HCT116 (cell line): ENCODE measurements at regions of chr11 and their contacts with region 1.

Region 1: DNA sequence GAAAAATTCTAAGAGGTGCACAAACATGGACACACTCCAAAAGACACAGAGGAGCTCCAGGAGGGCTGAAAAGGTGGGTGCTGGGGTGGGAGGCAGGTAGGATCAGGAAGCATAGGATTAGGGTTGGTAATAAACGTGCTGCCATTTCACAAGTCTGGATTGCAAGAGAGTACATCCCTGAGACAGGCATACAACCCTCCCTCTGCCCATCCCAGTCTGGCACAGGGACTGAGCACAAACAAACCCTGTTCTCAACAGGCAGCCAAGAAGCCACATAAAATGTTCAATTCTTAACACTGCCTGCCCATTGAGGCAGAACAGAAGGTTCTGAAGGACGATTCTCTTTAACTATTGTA is 18.5 kb downstream of the SLC35F2 start:
- DNase-seq: no peak
- ATAC-seq: peak; percentile 61
- H3K4me3 ChIP-seq: peak overlapping the region in 1 of 2 experiments; percentile 49; a peak in 2 of 4 replicates
- H3K27ac ChIP-seq: peak overlapping the region; percentile 69
- H3K4me1 ChIP-seq: peaks cover 54 to 67% of the 10 kb centered on the region in 2 experiments
- H3K27me3 ChIP-seq: no peaks in the 10 kb centered on the region
- CTCF ChIP-seq: no peak
- POLR2A ChIP-seq: no peak
- RAD21 ChIP-seq: no peak

Region 2: DNA sequence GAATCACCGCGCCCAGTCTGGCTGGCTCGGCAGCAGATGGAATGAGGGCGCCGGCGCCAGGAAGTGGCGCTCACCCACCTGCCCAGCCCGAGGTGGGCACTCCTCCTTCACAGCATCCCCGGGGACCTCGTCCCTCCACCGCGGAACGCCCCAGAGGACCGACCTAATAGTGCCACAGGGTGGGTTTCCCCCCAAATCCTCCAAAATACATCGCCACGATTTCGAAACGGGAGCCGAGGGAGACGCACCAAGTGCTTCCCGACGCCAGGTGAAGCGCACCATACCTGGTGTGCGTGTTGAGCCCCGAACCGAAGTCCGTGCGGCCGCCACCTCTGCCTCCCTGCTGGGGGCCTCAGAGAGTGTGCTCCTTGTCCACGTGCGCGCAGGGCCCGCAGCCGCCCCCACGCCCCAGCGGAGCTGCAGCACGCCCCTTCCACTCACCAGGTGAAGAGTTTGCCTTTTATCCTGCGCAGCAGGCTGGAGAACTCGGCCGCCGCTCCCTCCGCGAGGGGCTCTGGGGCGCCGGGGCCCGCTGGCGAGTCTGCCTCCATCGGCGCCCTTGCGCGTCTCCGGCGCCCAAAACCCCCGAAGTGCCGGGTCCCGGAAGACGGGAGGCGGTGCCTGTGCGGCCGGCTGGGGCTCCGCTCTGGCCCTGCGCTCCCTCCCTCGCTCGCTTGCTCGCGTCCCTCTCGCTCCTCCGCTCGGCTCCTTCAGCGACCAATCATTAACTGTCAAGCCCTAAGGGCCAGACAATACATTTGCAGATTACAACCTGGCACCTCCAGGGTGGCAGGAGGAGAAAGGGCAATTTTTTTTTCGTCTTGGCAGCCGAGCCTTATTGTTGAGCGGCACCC is 18.3 kb after region 1 on chr11 and contains the start of gene SLC35F2:
- CTCF ChIA-PET with region 1: no interaction called
- POLR2A ChIA-PET with region 1: interaction called, 6 read pairs
- RAD21 ChIA-PET with region 1: interaction called, 3 to 4 read pairs
- intact Hi-C with region 1: loop called (anchors 2 kb)
- DNase-seq: peak; percentile 73
- ATAC-seq: peak; percentile 81
- H3K4me3 ChIP-seq: peak within 1 kb of the TSS; percentile 54 to 97
- H3K27ac ChIP-seq: peak within 1 kb of the TSS; percentile 90
- H3K4me1 ChIP-seq: peaks cover 3 to 37% of the 10 kb centered on the region in 2 experiments; a peak in 3 of 4 replicates
- H3K27me3 ChIP-seq: no peaks in the 10 kb centered on the region
- CTCF ChIP-seq: 0 out of 6 replicates have a peak, but pooled peaks of 1 of the 3 experiments have one; percentile 0
- POLR2A ChIP-seq: peak; percentile 69
- RAD21 ChIP-seq: 0 out of 2 replicates have a peak, but pooled peaks have one; percentile 10
- total RNA-seq, gene SLC35F2: 53.5 TPM

Region 3: DNA sequence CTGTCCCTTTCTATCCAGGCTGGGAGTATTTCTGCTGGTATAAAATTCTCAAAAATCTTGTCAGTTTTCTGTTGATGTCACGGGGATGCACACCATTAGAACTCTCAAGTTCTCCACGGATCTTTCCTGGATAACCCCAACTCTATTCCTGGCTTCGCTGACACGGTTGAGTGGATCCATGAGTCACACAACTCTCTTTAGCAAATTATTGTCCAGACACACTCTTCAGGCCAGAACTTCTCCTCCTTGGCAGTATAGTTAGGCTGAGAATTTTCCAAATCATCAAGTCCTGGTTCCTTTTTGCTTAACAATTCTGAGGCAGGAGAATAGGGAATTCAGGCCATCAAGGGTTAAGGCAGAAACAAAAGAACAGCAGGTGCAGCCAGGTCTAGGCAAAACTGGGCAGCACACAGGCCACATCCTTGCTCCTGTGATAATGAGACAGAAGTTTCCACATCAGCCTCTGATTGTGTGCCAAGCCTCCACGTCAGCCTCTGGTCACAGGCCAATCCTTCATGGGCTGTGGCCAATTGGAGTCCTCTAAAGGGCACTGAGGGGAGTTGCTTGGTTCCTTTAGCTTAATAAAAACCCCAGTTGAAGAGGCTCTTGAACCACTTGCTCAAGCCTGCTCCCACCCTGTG is 275.5 kb after region 1 on chr11:
- CTCF ChIA-PET with region 1: no interaction called
- POLR2A ChIA-PET with region 1: no interaction called
- RAD21 ChIA-PET with region 1: no interaction called
- intact Hi-C with region 1: no loop called
- DNase-seq: no peak
- ATAC-seq: no peak
- H3K4me3 ChIP-seq: no peak overlapping the region
- H3K27ac ChIP-seq: no peak overlapping the region
- H3K4me1 ChIP-seq: peaks cover 0 to 13% of the 10 kb centered on the region in 2 experiments; a peak in 2 of 4 replicates
- H3K27me3 ChIP-seq: no peaks in the 10 kb centered on the region
- CTCF ChIP-seq: no peak
- POLR2A ChIP-seq: no peak
- RAD21 ChIP-seq: no peak